MCF 10A (cell line): ENCODE measurements at regions of chr17 and their contacts with region 1.

Region 1: GRCh38 chr17:55285340-55286301 is 20.9 kb downstream of the HLF start:
- DNase-seq: peak; percentile 89
- H3K4me3 Mint-ChIP-seq: peak overlapping the region; percentile 28
- H3K27ac Mint-ChIP-seq: peak overlapping the region; percentile 90
- H3K4me1 Mint-ChIP-seq: peaks cover 27% of the 10 kb centered on the region
- H3K27me3 Mint-ChIP-seq: no peaks in the 10 kb centered on the region
- CTCF ChIP-seq: no peak

Region 2: DNA sequence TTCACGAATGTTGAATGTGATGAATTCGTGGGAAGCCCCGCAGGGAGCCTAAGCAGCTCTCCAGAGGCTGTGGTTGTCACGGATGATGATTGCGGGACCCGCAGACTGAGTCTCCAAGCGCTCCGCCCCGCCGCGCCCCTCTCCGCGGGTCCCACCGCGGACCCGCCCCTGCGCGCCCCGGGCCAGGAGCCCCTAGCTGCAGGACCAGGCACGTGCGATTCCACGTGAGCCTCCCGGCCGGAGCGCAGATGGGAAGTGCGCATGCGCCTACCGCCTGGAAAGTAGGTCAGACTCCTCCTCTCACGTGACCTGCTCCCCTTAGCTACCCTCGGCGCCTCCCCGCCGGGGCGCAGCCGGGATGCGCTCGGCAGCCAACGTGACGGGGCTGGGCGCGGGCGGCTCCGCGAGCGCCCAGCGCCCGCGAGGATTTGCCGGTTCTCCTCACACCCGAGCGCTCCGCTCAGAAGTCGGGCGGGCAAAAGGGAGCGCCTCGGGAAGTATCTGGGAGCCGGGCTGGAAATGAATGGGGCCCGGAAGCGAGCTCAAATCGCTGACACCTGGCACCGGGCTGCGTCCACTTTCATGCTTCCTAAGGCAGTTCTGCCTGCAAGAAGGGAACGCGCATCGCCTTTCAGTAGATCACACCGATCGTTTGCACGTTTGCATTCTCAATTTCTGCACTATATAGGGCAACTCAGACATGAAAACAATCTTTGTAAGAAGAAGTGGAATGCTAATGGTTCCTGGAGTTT is 47.3 kb before region 1 on chr17:
- CTCF ChIA-PET with region 1: interaction called, 6 read pairs
- POLR2A ChIA-PET with region 1: interaction called, 33 read pairs
- intact Hi-C with region 1: no loop called
- DNase-seq: peak; percentile 93
- H3K4me3 Mint-ChIP-seq: peak overlapping the region; percentile 76
- H3K27ac Mint-ChIP-seq: no peak overlapping the region
- H3K4me1 Mint-ChIP-seq: peaks cover 18% of the 10 kb centered on the region
- H3K27me3 Mint-ChIP-seq: no peaks in the 10 kb centered on the region
- CTCF ChIP-seq: no peak

Region 3: DNA sequence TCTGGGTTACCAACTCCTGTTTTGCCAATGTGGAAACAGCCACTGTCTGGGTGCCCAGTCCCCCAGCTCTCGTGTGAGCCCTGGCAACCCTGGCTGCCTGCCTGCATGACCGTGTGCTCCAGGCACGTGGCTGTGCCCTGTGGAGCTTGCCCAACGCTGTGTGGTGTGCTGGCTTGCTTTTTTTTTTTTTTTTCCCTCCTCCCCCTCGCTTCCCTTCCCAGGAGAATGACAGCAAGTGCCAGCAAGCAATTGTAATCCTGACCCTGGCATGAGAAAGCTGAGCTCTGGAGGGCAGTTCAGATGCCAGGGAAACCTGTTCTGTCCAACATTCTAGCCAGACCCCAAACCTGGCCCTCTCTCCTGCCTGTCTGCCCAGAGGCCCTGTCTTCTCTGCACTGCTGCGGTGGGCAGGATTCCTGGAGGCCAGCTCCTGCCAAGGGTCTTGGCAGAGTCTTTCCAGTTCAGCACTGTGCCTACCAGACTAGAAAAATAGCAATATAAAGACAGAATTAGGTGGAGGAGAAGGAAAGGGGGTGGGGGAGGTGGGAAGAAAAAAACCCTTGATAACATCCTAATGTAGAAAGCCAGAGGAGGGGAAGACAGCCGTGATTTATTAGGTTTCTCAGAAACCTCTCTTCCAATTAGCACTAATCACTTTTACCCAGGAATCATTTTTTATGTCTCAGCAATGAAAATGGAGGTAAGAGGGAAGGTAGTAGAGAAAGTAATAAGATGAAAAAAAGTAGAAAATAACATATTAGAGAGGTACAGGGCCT is 11.9 kb before region 1 on chr17:
- CTCF ChIA-PET with region 1: interaction called, 11 read pairs
- POLR2A ChIA-PET with region 1: interaction called, 89 read pairs
- intact Hi-C with region 1: no loop called
- DNase-seq: peak; percentile 89
- H3K4me3 Mint-ChIP-seq: peak overlapping the region; percentile 17
- H3K27ac Mint-ChIP-seq: peak overlapping the region; percentile 79
- H3K4me1 Mint-ChIP-seq: peaks cover 34% of the 10 kb centered on the region
- H3K27me3 Mint-ChIP-seq: no peaks in the 10 kb centered on the region
- CTCF ChIP-seq: no peak